ENCODE measurements at regions of chr17 and their contacts with region 1.

Region 1: GRCh38 chr17:16521070-16521727 is 29.2 kb upstream of the LRRC75A start:
- DNase-seq: peak; percentile 88
- H3K4me3 ChIP-seq: no peak overlapping the region
- H3K27ac ChIP-seq: no peak overlapping the region
- H3K4me1 ChIP-seq: peaks cover 9% of the 10 kb centered on the region
- H3K27me3 ChIP-seq: peaks cover 7% of the 10 kb centered on the region
- CTCF ChIP-seq: peak; percentile 90

Region 2: GRCh38 chr17:16363749-16364536 is 157.3 kb before region 1 on chr17:
- CTCF ChIA-PET with region 1: interaction called, 12 read pairs
- POLR2A ChIA-PET with region 1: no interaction called
- intact Hi-C with region 1: loop called (anchors 1 kb)
- DNase-seq: peak; percentile 83
- H3K4me3 ChIP-seq: no peak overlapping the region
- H3K27ac ChIP-seq: no peak overlapping the region
- H3K4me1 ChIP-seq: no peaks in the 10 kb centered on the region
- H3K27me3 ChIP-seq: no peaks in the 10 kb centered on the region
- CTCF ChIP-seq: peak; percentile 96

Region 3: DNA sequence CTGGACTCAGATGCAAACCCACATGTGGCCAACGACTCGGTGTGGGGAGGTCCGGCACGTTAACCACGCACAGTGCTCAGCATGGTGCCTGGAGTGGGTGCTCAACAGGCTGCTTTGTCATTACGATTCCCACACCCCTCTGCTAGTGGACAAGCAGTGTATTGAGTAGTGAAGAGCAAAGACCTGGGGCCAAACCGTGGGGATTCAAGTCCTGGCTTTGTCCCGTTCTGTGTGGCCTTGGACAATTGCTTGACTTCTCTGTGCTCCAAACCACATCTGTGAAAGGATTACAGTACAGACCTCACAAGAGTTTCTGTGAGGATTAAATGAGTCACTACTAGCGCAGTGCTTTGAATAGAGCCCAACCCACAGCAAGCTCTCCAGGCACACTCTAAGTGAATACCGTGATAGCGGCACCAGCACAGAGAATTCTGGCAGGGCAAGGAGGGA is 72.1 kb before region 1 on chr17:
- CTCF ChIA-PET with region 1: interaction called, 31 read pairs
- POLR2A ChIA-PET with region 1: no interaction called
- intact Hi-C with region 1: loop called (anchors 1 kb)
- DNase-seq: no peak
- H3K4me3 ChIP-seq: no peak overlapping the region
- H3K27ac ChIP-seq: peak overlapping the region; percentile 25
- H3K4me1 ChIP-seq: peaks cover 12% of the 10 kb centered on the region
- H3K27me3 ChIP-seq: no peaks in the 10 kb centered on the region
- CTCF ChIP-seq: no peak

Region 4: DNA sequence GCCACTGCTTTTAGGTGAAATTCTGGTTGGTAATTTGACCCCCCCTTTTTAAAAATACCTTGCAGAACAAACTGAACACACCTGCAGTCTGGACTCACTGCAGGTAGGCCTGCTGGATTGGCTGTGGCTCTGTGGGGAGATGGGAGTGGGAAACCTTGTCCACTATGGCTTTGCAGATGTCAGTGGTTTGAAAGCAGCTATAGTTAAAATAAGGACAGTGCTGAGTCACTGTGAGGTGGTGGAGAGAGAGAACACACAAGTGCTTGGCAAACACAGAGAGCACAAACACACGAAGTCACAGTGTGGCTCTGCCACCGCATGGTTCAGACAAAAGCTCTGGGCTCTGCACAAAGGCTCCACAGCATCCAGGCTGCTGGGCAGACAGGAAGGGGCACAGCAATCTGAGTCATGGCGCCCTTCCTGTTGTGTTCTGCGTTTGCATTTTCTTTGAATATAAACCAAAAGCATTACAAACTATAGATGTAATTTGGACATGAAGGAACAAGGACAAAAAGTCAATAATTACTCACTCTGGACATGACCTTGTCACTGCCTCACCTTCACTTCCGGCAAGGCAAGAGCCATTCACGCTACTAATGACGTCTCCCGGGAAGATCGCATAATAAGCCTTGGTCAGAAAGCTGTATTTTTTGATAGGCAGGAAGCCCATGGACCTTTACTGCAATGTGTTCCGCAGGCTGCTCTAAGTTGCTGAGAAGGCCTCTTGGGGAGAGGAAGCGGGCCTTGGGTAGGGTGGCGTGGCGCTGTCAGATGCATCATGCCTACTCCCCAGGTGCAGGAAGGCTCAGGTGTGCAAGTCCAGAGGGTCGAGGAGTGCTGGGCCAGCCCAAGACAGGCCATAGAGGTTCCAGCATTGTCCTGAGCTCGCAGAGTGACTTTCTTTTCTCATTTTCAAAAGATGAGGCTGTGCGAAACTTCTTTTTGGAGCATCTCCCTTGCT is 895.5 kb after region 1 on chr17:
- CTCF ChIA-PET with region 1: interaction called, 10 read pairs
- POLR2A ChIA-PET with region 1: no interaction called
- intact Hi-C with region 1: no loop called
- DNase-seq: peak; percentile 35
- H3K4me3 ChIP-seq: no peak overlapping the region
- H3K27ac ChIP-seq: no peak overlapping the region
- H3K4me1 ChIP-seq: no peaks in the 10 kb centered on the region
- H3K27me3 ChIP-seq: no peaks in the 10 kb centered on the region
- CTCF ChIP-seq: no peak

Measured in A673 (cell line).